HCT116 (cell line): ENCODE measurements at regions of chr11 and their contacts with region 1.

Region 1: DNA sequence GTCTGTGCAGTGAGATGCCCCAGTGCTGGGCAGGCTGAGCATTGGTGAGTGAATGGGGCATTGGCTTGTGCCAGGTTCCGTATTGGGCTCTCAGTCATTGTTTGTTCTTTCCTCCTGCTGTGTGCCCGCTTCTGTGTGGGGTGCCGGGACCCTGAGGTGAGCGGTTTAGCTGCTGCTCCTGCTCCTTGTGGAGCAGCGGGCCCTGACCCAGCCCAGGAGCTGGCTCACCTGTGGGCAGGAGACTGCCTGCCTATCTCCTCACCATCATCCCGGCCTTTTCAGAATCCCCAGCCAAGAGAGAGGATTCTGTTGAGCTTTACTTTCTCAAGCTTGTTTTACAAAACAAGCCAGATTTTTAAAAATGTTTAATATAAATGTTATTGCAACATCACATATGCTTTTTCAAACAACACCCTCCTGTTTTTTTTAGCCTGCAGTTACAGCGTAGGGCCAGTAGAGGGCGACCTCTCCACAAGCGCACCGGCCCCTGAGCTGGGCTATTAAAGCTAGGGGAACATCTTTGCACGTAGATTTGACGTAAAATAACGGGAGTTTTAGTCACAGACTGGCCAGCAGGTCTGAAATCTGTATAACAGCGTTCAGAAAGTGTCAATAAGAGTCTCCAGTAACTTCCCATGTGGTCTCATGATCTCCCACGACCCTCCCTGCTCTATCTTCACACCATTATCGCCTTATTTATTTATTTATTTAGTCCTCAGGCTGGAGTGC is 25.1 kb upstream of the RELT start:
- DNase-seq: peak; percentile 41
- ATAC-seq: peak; percentile 85
- H3K4me3 ChIP-seq: no peak overlapping the region
- H3K27ac ChIP-seq: no peak overlapping the region
- H3K4me1 ChIP-seq: no peaks in the 10 kb centered on the region
- H3K27me3 ChIP-seq: no peaks in the 10 kb centered on the region
- CTCF ChIP-seq: peak; percentile 88 to 97 (median 97); a peak in 5 of 6 replicates
- POLR2A ChIP-seq: no peak
- RAD21 ChIP-seq: peak; percentile 84

Region 2: GRCh38 chr11:73376160-73376802 is 25.2 kb after region 1 on chr11 and contains the start of gene RELT:
- CTCF ChIA-PET with region 1: interaction called, 10 read pairs
- POLR2A ChIA-PET with region 1: no interaction called
- RAD21 ChIA-PET with region 1: no interaction called
- intact Hi-C with region 1: no loop called
- DNase-seq: peak; percentile 71
- ATAC-seq: peak; percentile 89
- H3K4me3 ChIP-seq: peak within 1 kb of the TSS; percentile 87 to 97
- H3K27ac ChIP-seq: peak within 1 kb of the TSS; percentile 88
- H3K4me1 ChIP-seq: peaks cover 6 to 27% of the 10 kb centered on the region in 2 experiments; a peak in 3 of 4 replicates
- H3K27me3 ChIP-seq: no peaks in the 10 kb centered on the region
- CTCF ChIP-seq: peak in 2 of 3 experiments; percentile 70 to 84; a peak in 5 of 6 replicates
- POLR2A ChIP-seq: peak; percentile 99
- RAD21 ChIP-seq: no peak
- total RNA-seq, gene RELT: 13.8 TPM

Region 3: DNA sequence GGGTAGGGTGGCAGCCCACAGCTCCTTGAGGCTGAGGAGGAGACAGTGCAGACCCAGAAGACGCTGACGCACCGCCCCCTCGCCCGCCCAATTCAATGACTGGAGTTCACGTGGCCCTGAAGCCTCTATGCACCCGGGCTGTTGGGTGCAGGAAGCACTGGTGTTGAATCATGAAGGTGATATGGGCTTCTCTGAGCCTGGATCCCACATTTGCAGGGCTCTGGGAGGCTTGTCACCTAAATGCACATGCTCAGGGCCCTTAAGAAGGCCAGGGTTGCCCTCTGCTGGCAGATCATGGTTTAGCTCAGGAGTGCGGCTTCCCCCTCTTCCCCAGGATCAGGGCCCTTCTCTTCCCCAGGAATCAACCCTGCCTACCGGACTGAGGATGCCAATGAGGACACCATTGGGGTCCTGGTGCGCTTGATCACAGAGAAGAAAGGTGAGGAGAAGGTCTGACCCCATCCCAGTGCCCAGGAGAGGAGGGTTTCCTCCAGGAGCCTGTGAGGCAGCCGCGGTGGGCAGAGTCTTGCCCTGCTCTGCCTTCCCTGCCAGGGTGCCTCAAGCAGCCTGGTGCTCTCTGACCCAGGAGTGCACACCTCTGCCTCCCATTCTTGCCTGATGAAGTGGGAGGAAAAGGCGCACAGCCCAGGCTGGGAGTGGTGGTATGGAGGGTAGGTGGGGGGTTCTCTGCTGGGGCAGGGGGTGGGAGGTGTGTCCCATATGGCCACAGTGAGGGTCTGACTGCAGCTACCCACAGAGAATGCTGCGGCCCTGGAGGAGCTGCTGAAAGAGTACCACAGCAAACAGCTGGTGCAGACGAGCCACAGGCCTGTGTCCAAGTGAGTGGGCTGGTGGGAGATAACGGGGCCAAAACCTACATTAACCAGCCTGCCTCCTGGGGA is 42.7 kb after region 1 on chr11:
- CTCF ChIA-PET with region 1: interaction called, 62 read pairs
- POLR2A ChIA-PET with region 1: interaction called, 4 read pairs
- RAD21 ChIA-PET with region 1: interaction called, 8 to 9 read pairs
- intact Hi-C with region 1: loop called (anchors 1 kb)
- DNase-seq: peak; percentile 41
- ATAC-seq: peak; percentile 90
- H3K4me3 ChIP-seq: no peak overlapping the region
- H3K27ac ChIP-seq: no peak overlapping the region
- H3K4me1 ChIP-seq: peaks cover 0 to 5% of the 10 kb centered on the region in 2 experiments; a peak in 1 of 4 replicates
- H3K27me3 ChIP-seq: no peaks in the 10 kb centered on the region
- CTCF ChIP-seq: peak; percentile 80 to 81 (median 80)
- POLR2A ChIP-seq: no peak
- RAD21 ChIP-seq: peak; percentile 87

Region 4: DNA sequence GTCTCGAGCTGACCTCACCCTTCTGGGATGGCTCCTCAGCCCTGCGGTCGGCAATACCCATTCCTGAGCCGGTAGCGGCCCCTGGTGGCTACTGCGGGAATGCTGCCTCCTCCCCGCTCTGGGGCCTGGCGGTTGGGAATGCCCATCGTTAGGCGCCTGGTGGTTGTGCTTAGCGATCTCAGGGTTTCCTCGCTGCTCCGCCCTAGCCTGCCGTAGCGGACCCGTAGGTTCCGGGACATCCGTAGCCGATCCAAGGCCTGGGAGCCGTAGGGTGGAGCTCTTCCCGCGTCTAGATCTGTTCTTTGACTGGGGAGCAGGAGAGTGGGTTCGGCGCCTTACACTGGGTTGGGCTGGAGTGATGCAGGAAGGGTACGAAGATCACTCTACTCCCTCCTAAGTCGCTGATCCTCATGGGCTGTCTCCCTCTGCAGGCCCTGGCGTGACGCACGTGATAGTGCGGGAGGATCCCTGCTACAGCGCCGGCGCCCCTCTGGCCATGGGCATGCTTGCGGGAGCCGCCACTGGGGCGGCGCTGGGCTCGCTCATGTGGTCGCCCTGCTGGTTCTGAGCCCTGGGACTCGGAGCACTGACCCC is 310.1 kb after region 1 on chr11:
- CTCF ChIA-PET with region 1: interaction called, 43 read pairs
- POLR2A ChIA-PET with region 1: interaction called, 3 read pairs
- RAD21 ChIA-PET with region 1: no interaction called
- intact Hi-C with region 1: loop called (anchors 2 kb)
- DNase-seq: peak; percentile 43
- ATAC-seq: peak; percentile 96
- H3K4me3 ChIP-seq: no peak overlapping the region
- H3K27ac ChIP-seq: peak overlapping the region; percentile 12; the same call in 1 of the 2 replicates
- H3K4me1 ChIP-seq: peaks cover 5 to 20% of the 10 kb centered on the region in 2 experiments
- H3K27me3 ChIP-seq: no peaks in the 10 kb centered on the region
- CTCF ChIP-seq: peak; percentile 92 to 95 (median 92)
- POLR2A ChIP-seq: no peak
- RAD21 ChIP-seq: peak; percentile 99

Region 5: GRCh38 chr11:73760679-73761402 is 409.8 kb after region 1 on chr11 and contains the start of gene RAB6A:
- CTCF ChIA-PET with region 1: no interaction called
- POLR2A ChIA-PET with region 1: no interaction called
- RAD21 ChIA-PET with region 1: no interaction called
- intact Hi-C with region 1: no loop called
- DNase-seq: peak; percentile 99
- ATAC-seq: peak; percentile 90
- H3K4me3 ChIP-seq: peak within 1 kb of the TSS; percentile 86 to 94
- H3K27ac ChIP-seq: peak within 1 kb of the TSS; percentile 92
- H3K4me1 ChIP-seq: peaks cover 10 to 21% of the 10 kb centered on the region in 2 experiments; a peak in 3 of 4 replicates
- H3K27me3 ChIP-seq: no peaks in the 10 kb centered on the region
- CTCF ChIP-seq: peak in 1 of 3 experiments; percentile 34; a peak in 2 of 6 replicates
- POLR2A ChIP-seq: peak; percentile 82
- RAD21 ChIP-seq: no peak; the same call in 1 of the 2 replicates
- total RNA-seq, gene RAB6A: 121 TPM